Activated T-helper 2 cell treated with anti-CD3 and anti-CD28 coated beads, Interferon-gamma antibody, Interleukin-2, Interleukin-4, amounts not matched to agents 10 μg/mL and 5 μg/mL and 100 μg/mL, durations not matched to agents 14 hours and 24 hours and 36 hours (primary cell): ENCODE measurements at regions of chr3 and their contacts with region 1.

Region 1: GRCh38 chr3:70358978-70359580 is 46.6 kb upstream of the MDFIC2 start:
- DNase-seq: no peak
- H3K4me3 Mint-ChIP-seq: no peak overlapping the region
- H3K27ac Mint-ChIP-seq: no peak overlapping the region
- H3K4me1 Mint-ChIP-seq: peaks cover 2% of the 10 kb centered on the region
- H3K27me3 Mint-ChIP-seq: no peaks in the 10 kb centered on the region

Region 2: DNA sequence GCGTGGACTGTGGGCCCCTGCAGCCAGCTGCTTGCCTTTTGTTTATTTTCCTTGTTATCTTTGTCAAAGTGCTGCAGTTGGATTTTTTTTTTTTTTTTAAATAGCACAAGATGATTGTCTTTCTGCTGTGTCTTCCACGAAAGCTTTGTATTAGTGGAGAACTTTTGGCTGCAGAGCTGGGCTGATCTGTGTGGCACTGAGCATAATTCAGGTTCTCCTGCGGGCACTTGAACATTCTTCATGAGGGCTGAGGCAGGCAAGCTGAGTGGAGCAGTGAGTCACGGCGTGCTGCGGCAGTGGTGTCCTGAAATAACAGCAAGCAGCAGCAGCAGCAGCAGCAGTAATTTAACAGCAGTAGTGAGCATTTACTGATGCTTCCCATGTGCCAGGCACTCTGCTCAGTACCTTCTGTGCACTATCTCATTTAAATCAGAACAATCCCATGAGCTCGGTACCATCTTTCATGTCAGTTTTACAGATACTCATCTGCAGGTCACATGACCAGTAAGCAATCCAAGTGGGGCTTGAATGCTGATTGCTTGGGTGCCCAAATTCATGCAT is 574.0 kb before region 1 on chr3:
- intact Hi-C with region 1: no loop called
- DNase-seq: no peak
- H3K4me3 Mint-ChIP-seq: no peak overlapping the region
- H3K27ac Mint-ChIP-seq: no peak overlapping the region
- H3K4me1 Mint-ChIP-seq: no peaks in the 10 kb centered on the region
- H3K27me3 Mint-ChIP-seq: no peaks in the 10 kb centered on the region

Region 3: GRCh38 chr3:70065696-70066253 is 293.3 kb before region 1 on chr3:
- intact Hi-C with region 1: loop called (anchors 5 kb)
- DNase-seq: no peak
- H3K4me3 Mint-ChIP-seq: no peak overlapping the region
- H3K27ac Mint-ChIP-seq: no peak overlapping the region
- H3K4me1 Mint-ChIP-seq: no peaks in the 10 kb centered on the region
- H3K27me3 Mint-ChIP-seq: peaks cover 2% of the 10 kb centered on the region

Region 4: GRCh38 chr3:70090322-70090913 is 268.7 kb before region 1 on chr3:
- intact Hi-C with region 1: loop called (anchors 1 kb)
- DNase-seq: no peak
- H3K4me3 Mint-ChIP-seq: no peak overlapping the region
- H3K27ac Mint-ChIP-seq: no peak overlapping the region
- H3K4me1 Mint-ChIP-seq: no peaks in the 10 kb centered on the region
- H3K27me3 Mint-ChIP-seq: peaks cover 1% of the 10 kb centered on the region

Region 5: GRCh38 chr3:70281663-70282062 is 77.4 kb before region 1 on chr3:
- intact Hi-C with region 1: no loop called
- DNase-seq: no peak
- H3K4me3 Mint-ChIP-seq: no peak overlapping the region
- H3K27ac Mint-ChIP-seq: no peak overlapping the region
- H3K4me1 Mint-ChIP-seq: no peaks in the 10 kb centered on the region
- H3K27me3 Mint-ChIP-seq: no peaks in the 10 kb centered on the region

Region 6: GRCh38 chr3:70519913-70520659 is 161.0 kb after region 1 on chr3:
- intact Hi-C with region 1: no loop called
- DNase-seq: no peak
- H3K4me3 Mint-ChIP-seq: no peak overlapping the region
- H3K27ac Mint-ChIP-seq: no peak overlapping the region
- H3K4me1 Mint-ChIP-seq: no peaks in the 10 kb centered on the region
- H3K27me3 Mint-ChIP-seq: peaks cover 10% of the 10 kb centered on the region